HEK293 (cell line): ENCODE measurements at regions of chr14 and their contacts with region 1.

Region 1: GRCh38 chr14:22653012-22653621 is 9.0 kb upstream of the OR6J1 start:
- H3K4me3 ChIP-seq: no peak overlapping the region
- H3K27ac ChIP-seq: no peak overlapping the region
- H3K4me1 ChIP-seq: peaks cover 5% of the 10 kb centered on the region; the same call in 1 of the 2 replicates
- CTCF ChIP-seq: peak; percentile 58

Region 2: DNA sequence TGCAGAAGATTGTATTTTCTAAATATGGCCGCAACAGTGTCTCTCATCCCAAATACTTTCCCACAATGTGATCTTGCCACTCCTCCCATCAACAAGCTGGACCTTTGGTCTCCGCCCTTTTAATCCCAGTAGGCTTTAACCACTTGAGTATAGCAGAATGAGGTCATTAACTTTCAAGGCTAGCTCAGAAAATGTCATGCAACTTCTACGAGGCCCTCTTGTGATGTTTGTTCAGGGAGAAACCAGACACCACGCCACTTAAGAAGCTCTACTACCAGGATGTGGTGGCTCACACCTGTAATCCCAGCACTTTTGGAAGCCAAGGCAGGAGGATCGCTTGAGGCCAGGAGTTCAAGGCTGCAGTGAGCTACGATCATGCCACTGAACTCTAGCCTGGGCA is 11.1 kb after region 1 on chr14:
- CTCF ChIA-PET with region 1: interaction called, 11 read pairs
- POLR2A ChIA-PET with region 1: interaction called, 4 read pairs
- H3K4me3 ChIP-seq: no peak overlapping the region
- H3K27ac ChIP-seq: no peak overlapping the region
- H3K4me1 ChIP-seq: peaks cover 7% of the 10 kb centered on the region
- CTCF ChIP-seq: no peak

Region 3: GRCh38 chr14:22900081-22900799 is 247.1 kb after region 1 on chr14:
- CTCF ChIA-PET with region 1: no interaction called
- POLR2A ChIA-PET with region 1: no interaction called
- H3K4me3 ChIP-seq: no peak overlapping the region
- H3K27ac ChIP-seq: no peak overlapping the region
- H3K4me1 ChIP-seq: no peaks in the 10 kb centered on the region
- CTCF ChIP-seq: peak; percentile 45; the same call in 1 of the 2 replicates